ENCODE measurements at regions of chr2 and their contacts with region 1.

Region 1: DNA sequence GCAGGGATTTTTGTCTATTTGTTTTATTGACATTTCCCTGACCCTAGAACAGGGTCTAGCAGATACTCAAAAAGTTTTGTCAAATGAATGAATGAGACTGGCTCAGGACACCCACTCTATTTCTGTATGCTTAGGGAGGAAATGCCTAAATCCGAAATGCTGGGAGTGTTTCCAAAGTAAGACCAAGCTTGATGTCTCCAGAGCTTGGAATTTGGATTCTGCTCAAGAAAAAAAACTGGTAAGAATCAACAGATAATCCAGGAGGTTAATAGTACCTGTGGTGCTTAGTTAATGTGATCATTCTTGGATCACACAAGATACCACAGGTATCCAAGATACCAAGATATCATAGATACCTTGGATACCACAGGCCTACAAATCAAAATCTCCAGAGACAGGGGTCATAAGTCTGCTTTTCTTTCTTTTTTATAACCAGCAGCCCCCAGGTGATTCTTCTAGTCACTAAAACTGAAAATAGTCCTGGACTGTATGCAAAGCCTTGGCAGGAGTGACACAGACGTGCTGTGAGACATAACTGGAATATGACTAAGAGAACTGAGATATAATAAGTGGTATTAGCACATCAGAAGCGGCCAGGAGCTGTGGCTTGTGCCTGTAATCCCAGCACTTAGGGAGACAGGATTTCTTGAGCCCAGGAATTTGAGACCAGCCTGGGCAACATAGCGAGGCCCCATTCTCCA is 39.9 kb upstream of the SP3 start:
- DNase-seq: peak; percentile 77 to 80
- ATAC-seq: peak; percentile 84
- H3K4me3 ChIP-seq: no peak overlapping the region
- H3K27ac ChIP-seq: peak overlapping the region; percentile 43 to 85
- H3K4me1 ChIP-seq: peaks cover 0 to 2% of the 10 kb centered on the region in 2 donors
- H3K27me3 ChIP-seq: no peaks in the 10 kb centered on the region

Region 2: GRCh38 chr2:173854840-173855239 is 150.2 kb before region 1 on chr2:
- intact Hi-C with region 1: loop called in 1 of 2 experiments (anchors 10 kb)
- DNase-seq: peak in 1 of 2 donors; percentile 67
- ATAC-seq: peak; percentile 80
- H3K4me3 ChIP-seq: no peak overlapping the region
- H3K27ac ChIP-seq: peak overlapping the region; percentile 25 to 93
- H3K4me1 ChIP-seq: peaks cover 0 to 2% of the 10 kb centered on the region in 2 donors
- H3K27me3 ChIP-seq: peaks cover 0 to 1% of the 10 kb centered on the region in 2 donors

Region 3: GRCh38 chr2:173982918-173983317 is 22.1 kb before region 1 on chr2:
- intact Hi-C with region 1: loop called in 1 of 2 experiments (anchors 2 kb)
- DNase-seq: peak in 1 of 2 donors; percentile 61
- ATAC-seq: peak; percentile 9
- H3K4me3 ChIP-seq: no peak overlapping the region
- H3K27ac ChIP-seq: peak overlapping the region; percentile 84 to 90
- H3K4me1 ChIP-seq: peaks cover 2 to 11% of the 10 kb centered on the region in 2 donors
- H3K27me3 ChIP-seq: no peaks in the 10 kb centered on the region